Endothelial cell of umbilical vein (primary cell): ENCODE measurements at regions of chr9 and their contacts with region 1.

Region 1: DNA sequence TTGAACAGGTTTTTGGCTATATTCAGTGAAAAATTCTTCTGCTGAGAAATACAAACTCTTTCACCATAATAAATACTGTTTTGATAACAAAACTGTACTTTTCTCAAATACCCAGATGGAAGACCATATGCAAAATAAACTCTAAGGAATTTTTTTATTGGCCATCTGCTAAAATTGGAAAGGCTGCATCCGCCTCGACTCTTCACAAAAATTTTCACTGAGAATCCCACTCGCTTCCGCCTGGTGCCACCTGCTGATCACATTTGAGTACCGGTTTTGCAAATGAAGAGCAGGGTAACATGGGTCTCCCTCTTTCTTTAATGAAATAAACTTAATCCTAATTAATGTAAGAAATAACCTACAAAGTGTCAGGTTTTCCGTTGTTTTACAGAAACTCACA is 76.4 kb downstream of the TTLL11 start:
- DNase-seq: peak; percentile 25
- H3K4me3 ChIP-seq: peak overlapping the region in 1 of 3 experiments; percentile 16
- H3K27ac ChIP-seq: peak overlapping the region; percentile 11
- H3K4me1 ChIP-seq: peaks cover 39% of the 10 kb centered on the region
- H3K27me3 ChIP-seq: no peaks in the 10 kb centered on the region
- CTCF ChIP-seq: peak in 1 of 2 donors; percentile 18
- POLR2A ChIP-seq: no peak

Region 2: DNA sequence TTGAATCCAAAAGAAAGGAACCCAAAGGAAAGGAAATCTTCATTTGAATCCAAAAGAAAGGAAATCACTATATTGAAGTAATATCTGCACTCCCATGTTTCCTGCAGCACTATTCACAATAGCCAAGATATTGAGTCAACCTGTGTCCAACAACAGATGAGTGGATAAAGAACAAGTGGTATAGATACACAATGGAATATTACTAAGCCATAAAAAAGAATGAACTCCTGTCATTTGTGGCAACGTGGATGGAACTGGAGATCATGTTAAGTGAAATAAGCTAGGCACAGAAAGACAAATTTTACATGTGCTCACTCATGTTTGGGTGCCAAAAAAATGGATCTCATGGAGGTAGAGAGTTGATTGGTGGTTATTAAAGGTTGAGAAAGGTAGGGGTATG is 588.8 kb before region 1 on chr9:
- CTCF ChIA-PET with region 1: no interaction called
- POLR2A ChIA-PET with region 1: no interaction called
- dilution Hi-C with region 1: no loop called
- intact Hi-C with region 1: no loop called
- DNase-seq: no peak
- H3K4me3 ChIP-seq: no peak overlapping the region
- H3K27ac ChIP-seq: no peak overlapping the region
- H3K4me1 ChIP-seq: no peaks in the 10 kb centered on the region
- H3K27me3 ChIP-seq: peaks cover 3 to 32% of the 10 kb centered on the region in 2 experiments
- CTCF ChIP-seq: no peak
- POLR2A ChIP-seq: no peak

Region 3: GRCh38 chr9:121852651-121853616 is 163.8 kb before region 1 on chr9:
- CTCF ChIA-PET with region 1: no interaction called
- POLR2A ChIA-PET with region 1: no interaction called
- dilution Hi-C with region 1: no loop called
- intact Hi-C with region 1: no loop called
- DNase-seq: no peak
- H3K4me3 ChIP-seq: no peak overlapping the region
- H3K27ac ChIP-seq: no peak overlapping the region
- H3K4me1 ChIP-seq: no peaks in the 10 kb centered on the region
- H3K27me3 ChIP-seq: no peaks in the 10 kb centered on the region
- CTCF ChIP-seq: no peak
- POLR2A ChIP-seq: no peak

Region 4: GRCh38 chr9:121944716-121945191 is 72.0 kb before region 1 on chr9:
- CTCF ChIA-PET with region 1: no interaction called
- POLR2A ChIA-PET with region 1: no interaction called
- dilution Hi-C with region 1: no loop called
- intact Hi-C with region 1: no loop called
- DNase-seq: no peak
- H3K4me3 ChIP-seq: no peak overlapping the region
- H3K27ac ChIP-seq: no peak overlapping the region
- H3K4me1 ChIP-seq: peaks cover 4% of the 10 kb centered on the region
- H3K27me3 ChIP-seq: no peaks in the 10 kb centered on the region
- CTCF ChIP-seq: no peak
- POLR2A ChIP-seq: no peak

Region 5: DNA sequence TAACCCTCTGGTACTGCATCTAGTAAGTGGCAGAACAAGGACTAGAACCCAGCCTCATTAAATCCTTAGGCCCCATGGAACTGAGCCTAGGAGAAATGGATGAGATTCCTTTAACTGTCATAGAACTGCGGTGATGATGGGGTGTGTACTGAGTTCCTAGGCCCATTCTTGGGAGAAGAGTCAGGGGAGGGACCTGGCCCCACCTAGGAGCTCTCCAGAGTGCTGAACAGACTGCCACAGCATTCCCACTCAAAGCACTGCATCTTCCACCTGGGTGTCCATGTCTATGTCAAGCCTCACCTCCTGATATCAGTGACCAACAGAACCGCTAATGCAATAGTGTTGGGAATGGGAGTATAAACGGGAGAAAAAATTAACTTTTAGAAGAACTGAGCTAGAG is 39.7 kb after region 1 on chr9:
- CTCF ChIA-PET with region 1: no interaction called
- POLR2A ChIA-PET with region 1: no interaction called
- dilution Hi-C with region 1: no loop called
- intact Hi-C with region 1: loop called (anchors 1 kb)
- DNase-seq: peak; percentile 12
- H3K4me3 ChIP-seq: no peak overlapping the region
- H3K27ac ChIP-seq: no peak overlapping the region
- H3K4me1 ChIP-seq: no peaks in the 10 kb centered on the region
- H3K27me3 ChIP-seq: no peaks in the 10 kb centered on the region
- CTCF ChIP-seq: no peak
- POLR2A ChIP-seq: no peak

Region 6: DNA sequence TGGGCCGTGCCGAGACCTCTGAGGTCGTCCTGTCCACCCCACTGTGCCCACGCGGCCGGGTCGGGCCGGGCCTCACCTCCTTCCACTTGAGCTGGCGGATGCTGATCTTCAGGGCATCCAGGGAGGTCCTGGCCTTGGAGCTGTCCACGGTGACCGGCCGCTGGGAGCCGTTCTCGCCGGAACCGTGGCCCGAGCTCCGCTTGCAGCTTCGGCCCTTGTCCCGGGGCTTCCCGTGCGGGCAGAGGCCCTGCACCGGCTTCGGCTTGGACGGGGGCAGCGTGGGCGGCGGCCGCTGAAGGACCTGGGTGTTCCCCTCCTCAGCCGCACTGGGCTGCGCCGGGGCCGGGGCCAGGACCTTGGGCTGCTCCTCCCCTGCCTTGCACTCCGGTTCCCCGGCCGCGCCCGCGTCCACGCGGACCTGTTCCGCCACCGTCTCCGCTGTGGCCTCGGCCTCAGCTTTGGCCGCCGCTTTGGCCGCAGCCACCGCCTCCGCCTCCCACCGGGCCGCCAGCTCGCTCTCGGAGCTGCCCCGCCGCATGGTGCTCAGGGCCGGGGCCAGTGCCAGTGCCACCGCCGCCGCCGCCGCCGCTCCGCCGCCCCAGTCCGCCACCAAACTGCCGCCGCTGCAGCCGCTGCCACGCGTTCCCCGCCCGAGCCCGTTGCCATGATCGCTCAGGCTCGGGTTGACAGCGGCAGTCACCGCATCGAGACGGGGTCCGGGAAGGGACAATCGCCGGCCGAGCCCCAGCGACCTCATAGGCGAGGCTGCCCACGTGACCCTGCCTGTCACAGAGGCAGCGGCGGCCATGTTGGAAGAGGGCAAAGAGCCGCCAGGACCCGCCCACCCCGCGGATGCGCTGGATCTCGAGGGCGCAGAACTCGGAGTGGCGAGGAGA is 76.1 kb after region 1 on chr9 and contains the start of gene TTLL11:
- CTCF ChIA-PET with region 1: no interaction called
- POLR2A ChIA-PET with region 1: no interaction called
- dilution Hi-C with region 1: no loop called
- intact Hi-C with region 1: loop called (anchors 2 kb)
- DNase-seq: peak; percentile 93
- H3K4me3 ChIP-seq: peak within 1 kb of the TSS; percentile 74 to 82 (median 78)
- H3K27ac ChIP-seq: no peak within 1 kb of the TSS
- H3K4me1 ChIP-seq: peaks cover 11% of the 10 kb centered on the region
- H3K27me3 ChIP-seq: peaks cover 0 to 2% of the 10 kb centered on the region in 2 experiments
- CTCF ChIP-seq: no peak
- POLR2A ChIP-seq: peak; percentile 56
- total RNA-seq, gene TTLL11: 4.9 and 8.1 TPM in 2 replicates